ENCODE measurements at regions of chr3 and their contacts with region 1.

Region 1: GRCh38 chr3:81760924-81761903 is at the start of gene GBE1:
- DNase-seq: peak; percentile 83
- ATAC-seq: peak; percentile 94
- H3K4me3 ChIP-seq: peak within 1 kb of the TSS; percentile 67
- H3K27ac ChIP-seq: peak within 1 kb of the TSS; percentile 97
- H3K4me1 ChIP-seq: peaks cover 9% of the 10 kb centered on the region
- H3K27me3 ChIP-seq: no peaks in the 10 kb centered on the region
- CTCF ChIP-seq: peak; percentile 52 to 56 (median 52); a peak in 5 of 6 replicates
- EP300 ChIP-seq: peak; percentile 41 to 61
- POLR2A ChIP-seq: peak; percentile 93
- RAD21 ChIP-seq: peak; percentile 48
- polyA plus RNA-seq, gene GBE1: 21.4 to 21.8 TPM

Region 2: DNA sequence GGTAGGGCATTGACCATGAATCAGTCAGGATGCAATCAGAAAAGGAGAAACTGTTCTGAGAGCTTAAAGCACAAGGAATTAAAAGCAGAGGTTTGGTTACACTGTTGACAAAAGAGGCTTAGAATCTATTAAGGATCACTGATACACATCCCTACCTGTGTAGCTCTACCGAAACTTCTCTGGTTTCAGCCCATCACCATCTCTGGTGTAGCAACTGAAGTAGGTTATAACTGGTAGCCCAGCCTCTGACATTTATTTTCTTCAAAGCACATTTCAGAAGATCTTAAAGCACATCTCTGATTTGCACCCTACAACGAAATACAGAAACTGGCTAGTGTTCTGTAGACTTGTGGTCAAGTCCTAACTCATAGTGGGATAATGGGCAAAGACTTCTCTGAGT is 283.5 kb before region 1 on chr3:
- CTCF ChIA-PET with region 1: no interaction called
- POLR2A ChIA-PET with region 1: no interaction called
- RAD21 ChIA-PET with region 1: no interaction called
- SMC1A ChIA-PET with region 1: no interaction called
- in situ Hi-C with region 1: no loop called
- intact Hi-C with region 1: no loop called
- DNase-seq: no peak
- ATAC-seq: no peak
- H3K4me3 ChIP-seq: no peak overlapping the region
- H3K27ac ChIP-seq: no peak overlapping the region
- H3K4me1 ChIP-seq: no peaks in the 10 kb centered on the region
- H3K27me3 ChIP-seq: no peaks in the 10 kb centered on the region
- CTCF ChIP-seq: no peak
- EP300 ChIP-seq: no peak
- POLR2A ChIP-seq: no peak
- RAD21 ChIP-seq: no peak

Region 3: DNA sequence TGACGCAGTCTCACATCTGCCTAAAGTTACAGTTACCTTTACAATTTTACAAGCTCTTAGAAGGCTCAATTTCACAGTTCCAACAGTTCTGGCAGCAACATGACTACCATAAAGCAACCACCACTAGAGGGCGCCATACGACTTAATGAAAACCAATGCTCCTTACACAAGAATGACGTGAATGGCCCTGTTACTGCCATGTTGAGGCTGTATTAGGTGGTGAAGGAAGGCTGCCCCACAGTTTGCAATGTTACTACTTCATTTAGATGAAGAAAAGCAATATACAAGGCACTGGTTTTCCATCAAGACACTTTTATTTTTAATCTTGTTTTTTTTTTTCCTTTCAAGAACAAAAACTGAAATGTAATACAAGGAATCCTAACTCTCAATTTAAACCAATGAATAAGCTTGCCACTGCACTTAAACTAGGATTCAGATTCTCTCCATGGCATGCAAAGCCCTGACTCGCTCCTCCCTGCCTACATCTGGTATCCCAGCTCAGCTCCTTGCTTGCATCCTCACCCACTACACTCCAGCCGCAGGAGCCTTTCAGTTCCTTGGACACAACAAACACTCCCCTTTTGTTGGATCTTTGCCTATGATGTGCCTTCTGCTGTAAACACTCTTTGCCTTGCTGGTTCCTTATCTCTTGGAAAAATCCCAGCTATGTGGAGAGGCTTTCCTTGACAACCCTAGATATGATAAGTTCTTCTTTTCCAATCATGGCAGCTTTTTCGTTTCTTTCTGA is 270.5 kb before region 1 on chr3:
- CTCF ChIA-PET with region 1: interaction called, 5 read pairs
- POLR2A ChIA-PET with region 1: interaction called, 3 read pairs
- RAD21 ChIA-PET with region 1: no interaction called
- SMC1A ChIA-PET with region 1: no interaction called
- in situ Hi-C with region 1: no loop called
- intact Hi-C with region 1: loop called (anchors 5 kb)
- DNase-seq: peak; percentile 36
- ATAC-seq: peak; percentile 99
- H3K4me3 ChIP-seq: no peak overlapping the region
- H3K27ac ChIP-seq: no peak overlapping the region
- H3K4me1 ChIP-seq: peaks cover 3% of the 10 kb centered on the region
- H3K27me3 ChIP-seq: no peaks in the 10 kb centered on the region
- CTCF ChIP-seq: peak; percentile 69 to 76 (median 73)
- EP300 ChIP-seq: no peak
- POLR2A ChIP-seq: no peak
- RAD21 ChIP-seq: peak; percentile 74

Region 4: GRCh38 chr3:81743096-81744025 is 17.9 kb before region 1 on chr3:
- CTCF ChIA-PET with region 1: interaction called, 10 read pairs
- POLR2A ChIA-PET with region 1: interaction called, 3 read pairs
- RAD21 ChIA-PET with region 1: interaction called, 6 read pairs
- SMC1A ChIA-PET with region 1: interaction called, 18 read pairs
- in situ Hi-C with region 1: no loop called
- intact Hi-C with region 1: no loop called
- DNase-seq: no peak
- ATAC-seq: no peak
- H3K4me3 ChIP-seq: no peak overlapping the region
- H3K27ac ChIP-seq: no peak overlapping the region
- H3K4me1 ChIP-seq: 0 out of 2 replicates have a peak, but pooled peaks cover 2% of the 10 kb centered on the region
- H3K27me3 ChIP-seq: no peaks in the 10 kb centered on the region
- CTCF ChIP-seq: no peak
- EP300 ChIP-seq: no peak
- POLR2A ChIP-seq: no peak
- RAD21 ChIP-seq: no peak

Region 5: GRCh38 chr3:81788610-81789009 is 27.4 kb after region 1 on chr3:
- CTCF ChIA-PET with region 1: interaction called, 4 read pairs
- POLR2A ChIA-PET with region 1: interaction called, 3 read pairs
- RAD21 ChIA-PET with region 1: interaction called, 8 read pairs
- SMC1A ChIA-PET with region 1: interaction called, 16 read pairs
- in situ Hi-C with region 1: no loop called
- intact Hi-C with region 1: loop called (anchors 2 kb)
- DNase-seq: peak; percentile 58
- ATAC-seq: peak; percentile 88
- H3K4me3 ChIP-seq: no peak overlapping the region
- H3K27ac ChIP-seq: peak overlapping the region; percentile 69
- H3K4me1 ChIP-seq: peaks cover 16% of the 10 kb centered on the region
- H3K27me3 ChIP-seq: no peaks in the 10 kb centered on the region
- CTCF ChIP-seq: no peak
- EP300 ChIP-seq: peak in 1 of 2 experiments; percentile 31; a peak in 1 of 4 replicates
- POLR2A ChIP-seq: no peak
- RAD21 ChIP-seq: no peak

Region 6: DNA sequence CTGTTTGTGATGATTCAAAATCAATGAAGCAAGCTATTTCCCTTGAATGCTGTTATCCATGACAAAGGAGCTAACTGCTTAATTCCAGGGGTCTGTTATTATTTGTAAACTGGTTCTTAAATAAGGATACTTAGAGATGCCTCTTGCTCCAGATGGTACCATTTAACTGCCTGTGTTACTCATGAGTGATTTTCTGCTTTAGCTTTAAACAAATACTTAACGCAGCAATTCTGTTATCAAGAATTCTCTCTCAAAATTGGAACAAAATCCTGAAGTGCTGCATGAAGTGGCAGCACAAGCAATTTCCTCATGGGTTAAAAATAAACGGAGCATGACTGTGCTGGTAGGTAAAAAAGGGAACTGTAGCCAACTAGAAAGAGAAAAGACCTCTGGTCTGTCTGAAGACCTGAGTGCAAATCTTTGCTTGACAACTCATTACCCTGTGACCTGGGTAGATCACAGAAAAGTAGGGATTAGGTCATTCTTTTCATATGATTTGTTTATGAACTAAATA is 62.7 kb after region 1 on chr3:
- CTCF ChIA-PET with region 1: interaction called, 3 read pairs
- POLR2A ChIA-PET with region 1: interaction called, 20 read pairs
- RAD21 ChIA-PET with region 1: interaction called, 10 read pairs
- SMC1A ChIA-PET with region 1: interaction called, 15 read pairs
- in situ Hi-C with region 1: no loop called
- intact Hi-C with region 1: no loop called
- DNase-seq: peak; percentile 59
- ATAC-seq: peak; percentile 99
- H3K4me3 ChIP-seq: no peak overlapping the region
- H3K27ac ChIP-seq: peak overlapping the region; percentile 53
- H3K4me1 ChIP-seq: peaks cover 10% of the 10 kb centered on the region; the same call in 1 of the 2 replicates
- H3K27me3 ChIP-seq: no peaks in the 10 kb centered on the region
- CTCF ChIP-seq: no peak
- EP300 ChIP-seq: 0 out of 4 replicates have a peak, but pooled peaks of 1 of the 2 experiments have one; percentile 29
- POLR2A ChIP-seq: no peak
- RAD21 ChIP-seq: no peak

Region 7: GRCh38 chr3:82293867-82294266 is 532.7 kb after region 1 on chr3:
- CTCF ChIA-PET with region 1: no interaction called
- POLR2A ChIA-PET with region 1: no interaction called
- RAD21 ChIA-PET with region 1: no interaction called
- SMC1A ChIA-PET with region 1: no interaction called
- in situ Hi-C with region 1: no loop called
- intact Hi-C with region 1: loop called (anchors 10 kb)
- DNase-seq: peak; percentile 57
- ATAC-seq: peak; percentile 93
- H3K4me3 ChIP-seq: no peak overlapping the region
- H3K27ac ChIP-seq: no peak overlapping the region
- H3K4me1 ChIP-seq: no peaks in the 10 kb centered on the region; the same call in 1 of the 2 replicates
- H3K27me3 ChIP-seq: no peaks in the 10 kb centered on the region
- CTCF ChIP-seq: no peak
- EP300 ChIP-seq: peak; percentile 88 to 90
- POLR2A ChIP-seq: no peak
- RAD21 ChIP-seq: no peak

Measured in GM12878 (cell line).